H1 (cell line): ENCODE measurements at regions of chr13 and their contacts with region 1.

Region 1: DNA sequence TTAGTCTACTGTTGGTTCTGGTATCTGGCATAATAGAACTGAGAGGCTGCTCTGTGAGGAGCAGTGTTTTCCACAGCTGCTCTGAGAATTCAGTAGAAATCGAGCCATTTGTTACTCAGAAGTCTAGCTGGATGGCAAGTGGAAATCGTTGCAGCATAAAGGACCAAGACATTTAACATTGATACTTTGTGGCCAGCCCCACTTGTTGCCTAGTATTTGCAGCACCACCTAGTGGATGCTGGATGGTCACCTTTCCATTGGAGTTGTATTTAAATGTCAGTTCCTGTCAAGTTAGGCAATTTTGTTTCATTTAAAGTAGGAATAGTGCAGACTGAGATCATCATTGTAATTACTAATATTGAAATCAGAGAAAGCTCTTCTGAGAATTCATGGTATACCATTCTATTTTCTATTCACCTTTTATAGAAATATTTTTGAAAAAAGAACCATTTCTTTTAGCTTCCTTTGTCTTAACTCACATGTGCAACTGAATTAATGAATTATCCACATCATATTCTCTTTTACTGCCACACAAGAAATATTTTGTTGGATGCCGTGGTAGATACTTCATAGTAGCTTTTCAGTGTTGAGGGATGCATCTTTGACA is 64.6 kb downstream of the PDS5B start:
- DNase-seq: no peak
- H3K4me3 ChIP-seq: no peak overlapping the region
- H3K27ac ChIP-seq: no peak overlapping the region
- H3K4me1 ChIP-seq: peaks cover 0 to 6% (median 4%) of the 10 kb centered on the region in 4 experiments; a peak in 3 of 7 replicates
- H3K27me3 ChIP-seq: no peaks in the 10 kb centered on the region
- CTCF ChIP-seq: peak; percentile 34 to 83 (median 66)
- EP300 ChIP-seq: no peak
- POLR2A ChIP-seq: no peak
- RAD21 ChIP-seq: peak; percentile 65 to 68

Region 2: DNA sequence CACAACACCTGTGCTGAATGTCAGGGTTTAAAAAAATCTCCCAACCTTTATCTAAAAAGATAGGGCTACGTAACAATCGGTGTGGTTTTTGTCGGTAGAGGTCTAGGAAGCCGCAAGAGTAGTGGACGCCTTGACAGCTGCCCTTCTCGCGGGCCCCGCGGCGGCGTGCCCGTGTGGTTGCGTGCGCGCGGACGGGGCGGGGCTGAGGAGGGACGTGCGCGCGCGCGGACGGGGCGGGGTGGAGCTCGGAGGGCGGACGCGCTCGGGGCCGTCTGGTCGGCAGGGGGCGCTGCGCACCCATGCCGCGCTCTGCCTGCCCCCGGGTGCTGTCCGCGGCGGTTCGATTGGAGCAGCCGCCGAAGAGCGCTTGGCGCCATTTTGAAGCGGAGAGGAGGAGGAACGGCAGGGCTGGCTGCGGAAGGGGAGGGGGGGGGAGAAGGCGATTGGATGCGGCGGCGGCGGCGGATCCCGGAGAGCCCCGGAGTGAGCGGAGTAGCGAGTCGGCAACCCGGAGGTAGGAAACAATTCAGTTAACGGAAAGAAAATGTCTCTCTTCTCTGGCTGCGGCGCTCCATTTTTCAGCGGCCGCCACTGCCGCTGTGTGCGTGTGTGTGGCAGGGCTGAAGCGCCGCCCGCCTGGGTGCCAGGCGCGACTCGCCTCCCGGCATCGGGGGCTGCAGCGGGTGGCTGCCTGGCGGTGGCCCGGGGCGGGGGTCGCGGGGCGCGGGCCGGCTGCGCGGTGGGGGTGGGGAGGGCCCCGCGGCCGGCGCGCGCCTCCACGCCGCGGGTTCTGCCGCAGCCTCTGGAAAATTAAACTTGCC is 64.5 kb before region 1 on chr13 and contains the start of gene PDS5B:
- CTCF ChIA-PET with region 1: interaction called, 20 read pairs
- POLR2A ChIA-PET with region 1: no interaction called
- DNase-seq: peak; percentile 78 to 96
- H3K4me3 ChIP-seq: peak within 1 kb of the TSS; percentile 70 to 99 (median 96)
- H3K27ac ChIP-seq: peak within 1 kb of the TSS; percentile 79
- H3K4me1 ChIP-seq: peaks cover 0 to 5% (median 2%) of the 10 kb centered on the region in 4 experiments; a peak in 1 of 7 replicates
- H3K27me3 ChIP-seq: no peaks in the 10 kb centered on the region
- CTCF ChIP-seq: peak; percentile 79 to 89 (median 86)
- EP300 ChIP-seq: no peak
- POLR2A ChIP-seq: peak in 1 of 2 experiments; percentile 22; a peak in 2 of 3 replicates
- RAD21 ChIP-seq: peak; percentile 80 to 86
- total RNA-seq, gene PDS5B: 54.6 and 59.1 TPM in 2 replicates

Region 3: DNA sequence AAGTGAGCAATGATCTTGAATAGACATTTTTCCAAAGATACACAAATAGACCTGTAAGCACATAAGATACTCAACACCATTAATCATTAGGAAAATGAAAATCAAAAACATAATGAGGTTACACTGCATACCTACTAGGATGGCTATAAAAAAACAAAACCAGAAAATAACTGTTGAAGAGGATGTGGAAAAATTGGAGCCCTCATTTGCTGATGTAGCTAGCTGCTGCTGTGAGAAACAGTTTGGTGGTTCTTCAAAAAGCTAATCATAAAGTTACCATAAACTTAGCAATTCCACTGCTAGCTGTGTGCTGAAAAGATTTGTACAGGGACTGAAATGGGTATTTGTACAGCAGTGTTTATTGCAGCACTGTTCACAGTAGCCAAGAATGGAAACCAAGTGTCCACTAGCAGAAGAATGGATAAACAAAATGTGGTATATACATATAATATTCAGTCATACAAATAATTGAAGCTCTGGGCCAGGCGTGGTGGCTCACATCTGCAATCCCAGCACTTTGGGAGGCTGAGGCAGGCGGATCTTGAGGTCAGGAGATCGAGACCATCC is 18.4 kb before region 1 on chr13:
- CTCF ChIA-PET with region 1: interaction called, 14 read pairs
- POLR2A ChIA-PET with region 1: no interaction called
- DNase-seq: no peak
- H3K4me3 ChIP-seq: no peak overlapping the region
- H3K27ac ChIP-seq: no peak overlapping the region
- H3K4me1 ChIP-seq: no peaks in the 10 kb centered on the region
- H3K27me3 ChIP-seq: no peaks in the 10 kb centered on the region
- CTCF ChIP-seq: no peak
- EP300 ChIP-seq: no peak
- POLR2A ChIP-seq: no peak
- RAD21 ChIP-seq: no peak

Region 4: DNA sequence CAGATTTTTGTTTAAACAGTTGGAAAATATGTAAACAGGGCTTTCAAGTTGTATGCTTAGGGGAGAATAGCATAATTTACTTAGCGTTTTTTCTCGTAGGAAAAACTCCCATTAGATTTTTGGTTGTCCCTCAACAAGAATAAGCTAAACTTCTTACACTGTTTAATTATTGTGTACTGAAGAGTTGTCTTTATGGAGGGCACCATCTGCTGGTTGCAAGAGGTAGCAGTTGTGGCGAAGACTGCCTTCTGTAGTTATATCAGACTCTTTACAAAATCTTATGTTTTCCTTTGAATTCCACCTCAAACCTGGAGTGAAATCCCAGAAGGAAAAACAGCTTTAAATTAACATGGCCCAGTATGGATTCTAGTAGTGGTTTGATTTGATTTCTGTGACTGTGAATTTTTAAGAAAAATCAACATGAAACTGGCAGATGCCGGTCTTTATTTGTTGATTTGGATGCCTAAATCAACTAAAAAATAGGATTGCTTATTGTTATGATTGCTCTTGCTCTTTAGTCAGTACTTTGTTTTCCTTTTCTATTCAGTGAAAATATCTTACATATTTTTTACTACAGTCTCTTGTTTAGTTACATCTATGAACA is 11.2 kb before region 1 on chr13:
- CTCF ChIA-PET with region 1: interaction called, 38 read pairs
- POLR2A ChIA-PET with region 1: no interaction called
- DNase-seq: no peak
- H3K4me3 ChIP-seq: no peak overlapping the region
- H3K27ac ChIP-seq: no peak overlapping the region
- H3K4me1 ChIP-seq: no peaks in the 10 kb centered on the region
- H3K27me3 ChIP-seq: no peaks in the 10 kb centered on the region
- CTCF ChIP-seq: peak in 2 of 3 experiments; percentile 62 to 69; a peak in 3 of 4 replicates
- EP300 ChIP-seq: no peak
- POLR2A ChIP-seq: no peak
- RAD21 ChIP-seq: peak; percentile 66 to 73

Region 5: DNA sequence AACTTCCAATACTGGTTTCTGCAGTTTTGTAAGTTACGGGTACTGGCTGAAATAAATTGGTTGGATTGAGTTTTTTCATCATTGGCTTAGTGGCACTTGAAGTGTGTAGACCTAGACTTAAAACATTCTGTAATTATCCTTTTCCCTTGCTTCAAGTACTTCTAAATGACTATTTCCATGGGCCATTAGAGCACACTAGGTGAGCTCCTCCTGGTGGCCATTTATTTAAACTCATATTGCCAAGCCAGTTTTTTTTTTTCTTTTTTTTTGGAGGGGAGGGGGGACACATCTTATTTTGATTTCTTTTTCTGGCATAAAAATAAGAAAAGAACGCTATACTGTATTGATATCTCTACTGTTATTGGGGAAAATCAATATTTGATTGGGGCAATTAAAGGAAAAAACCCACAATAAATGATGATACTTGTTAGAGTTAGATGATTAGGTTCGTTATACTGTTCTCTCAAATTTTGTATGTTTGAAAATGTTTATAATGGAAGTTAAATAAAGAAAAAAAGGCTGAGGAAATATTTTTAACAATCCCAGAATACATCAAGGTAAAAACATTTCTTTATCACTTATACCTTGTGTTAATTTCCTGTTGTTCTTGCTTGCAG is 18.3 kb after region 1 on chr13:
- CTCF ChIA-PET with region 1: interaction called, 11 read pairs
- POLR2A ChIA-PET with region 1: no interaction called
- DNase-seq: no peak
- H3K4me3 ChIP-seq: no peak overlapping the region
- H3K27ac ChIP-seq: no peak overlapping the region
- H3K4me1 ChIP-seq: no peaks in the 10 kb centered on the region
- H3K27me3 ChIP-seq: no peaks in the 10 kb centered on the region
- CTCF ChIP-seq: peak in 2 of 3 experiments; percentile 45 to 59; a peak in 2 of 4 replicates
- EP300 ChIP-seq: no peak
- POLR2A ChIP-seq: no peak
- RAD21 ChIP-seq: peak; percentile 51 to 56